Naive thymus-derived CD8-positive, alpha-beta T cell (primary cell): ENCODE measurements at regions of chr4 and their contacts with region 1.

Region 1: DNA sequence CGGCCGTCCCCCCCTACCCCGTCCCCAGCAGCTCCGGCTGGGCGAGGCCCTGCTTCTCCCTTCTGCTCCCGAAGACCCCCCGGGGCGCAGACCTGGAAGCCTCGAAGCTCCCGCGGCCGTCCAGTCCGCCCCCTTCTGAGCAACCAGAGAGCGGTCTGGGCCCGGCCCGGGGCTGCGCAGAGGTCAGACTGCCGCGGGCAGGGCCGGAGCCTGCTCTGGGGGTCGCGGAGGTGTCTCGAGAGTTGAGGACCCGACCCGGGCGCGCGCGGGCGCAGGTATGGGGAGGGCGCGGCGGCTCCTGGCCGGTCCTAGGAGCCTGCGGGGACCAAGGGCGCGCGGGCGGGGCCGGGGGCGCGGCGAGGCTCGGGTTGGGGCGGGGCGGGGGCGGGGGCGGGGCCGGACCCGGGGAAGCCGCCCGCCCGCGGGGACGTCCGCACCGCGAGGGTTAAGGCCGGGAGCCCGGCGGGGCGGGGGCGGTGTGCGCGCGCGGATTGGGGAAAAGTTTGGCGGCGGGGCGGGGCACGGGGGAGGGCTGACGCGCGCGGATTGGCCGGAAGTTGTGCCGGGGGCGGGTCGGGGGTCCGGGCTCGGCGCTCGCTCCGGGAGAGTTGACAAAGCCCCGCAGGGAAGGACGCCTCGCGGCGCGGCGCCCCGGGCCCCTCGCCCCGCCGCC is at the start of gene FGFRL1:
- DNase-seq: peak; percentile 75 to 94 (median 84)
- ATAC-seq: peak; percentile 55 to 67
- H3K4me3 Mint-ChIP-seq: peak within 1 kb of the TSS; percentile 83 to 96 (median 92)
- H3K27ac Mint-ChIP-seq: peak within 1 kb of the TSS; percentile 81 to 97 (median 94)
- H3K4me1 Mint-ChIP-seq: peaks cover 9 to 20% (median 17%) of the 10 kb centered on the region in 4 donors
- H3K27me3 Mint-ChIP-seq: peaks cover 8 to 33% (median 23%) of the 10 kb centered on the region in 5 donors
- polyA plus RNA-seq, gene FGFRL1: 0.65 to 1.2 (median 0.73) TPM

Region 2: GRCh38 chr4:993111-994029 is 17.8 kb before region 1 on chr4 and contains the start of gene SLC26A1:
- POLR2A ChIA-PET with region 1: no interaction called
- DNase-seq: no peak
- ATAC-seq: no peak
- H3K4me3 Mint-ChIP-seq: no peak within 1 kb of the TSS
- H3K27ac Mint-ChIP-seq: no peak within 1 kb of the TSS
- H3K4me1 Mint-ChIP-seq: peaks cover 4 to 12% (median 10%) of the 10 kb centered on the region in 4 donors
- H3K27me3 Mint-ChIP-seq: peaks cover under 1 to 6% (median 2%) of the 10 kb centered on the region in 5 donors
- polyA plus RNA-seq, gene SLC26A1: 0.72 to 1.3 (median 1.1) TPM

Region 3: GRCh38 chr4:1033840-1034551 is 22.8 kb after region 1 on chr4:
- POLR2A ChIA-PET with region 1: no interaction called
- DNase-seq: no peak
- ATAC-seq: no peak
- H3K4me3 Mint-ChIP-seq: no peak overlapping the region
- H3K27ac Mint-ChIP-seq: no peak overlapping the region
- H3K4me1 Mint-ChIP-seq: no peaks in the 10 kb centered on the region
- H3K27me3 Mint-ChIP-seq: peaks cover 0 to 6% (median 0%) of the 10 kb centered on the region in 5 donors

Region 4: DNA sequence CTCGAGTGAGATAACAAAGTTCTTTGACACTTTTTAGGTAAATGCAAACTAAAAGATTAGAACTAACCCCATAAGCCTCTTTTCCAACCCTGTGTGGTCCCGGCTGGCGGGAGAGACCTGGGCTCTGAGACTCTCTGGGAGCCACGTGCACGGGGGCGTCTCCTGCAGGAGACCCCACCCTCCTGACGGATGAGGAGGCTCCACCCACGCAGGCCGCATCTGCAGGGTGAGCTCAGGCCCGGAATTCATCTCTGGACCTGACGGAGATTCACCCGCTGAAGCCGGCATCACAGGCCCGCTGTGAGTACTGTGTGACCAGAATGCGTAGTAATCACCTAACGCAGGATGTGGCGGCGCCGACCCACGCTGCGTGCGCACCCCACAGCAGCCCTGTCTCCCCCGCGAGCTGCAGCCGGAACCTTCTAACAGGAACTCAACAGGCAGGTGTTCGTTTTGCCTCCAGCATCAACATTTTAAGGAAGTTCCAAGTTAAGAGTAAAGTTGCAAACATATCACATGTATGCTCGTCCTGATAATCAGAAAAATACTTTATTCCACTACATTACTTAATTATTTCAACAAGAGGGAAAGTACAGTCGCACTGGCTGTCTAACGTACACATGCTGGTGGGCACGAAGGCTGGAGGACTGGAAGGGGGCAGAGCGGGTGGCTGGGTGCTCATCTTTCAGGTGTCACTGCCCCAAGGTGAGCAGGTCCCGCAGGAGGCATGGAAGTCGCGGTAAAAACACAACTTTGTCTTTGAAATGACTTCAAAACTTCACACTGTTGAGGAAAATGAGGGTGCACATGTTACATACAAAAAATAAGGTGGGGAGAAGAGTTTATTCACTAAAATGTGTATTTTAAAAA is 44.8 kb after region 1 on chr4:
- POLR2A ChIA-PET with region 1: interaction called, 10 read pairs
- DNase-seq: peak; percentile 71 to 94 (median 90)
- ATAC-seq: peak; percentile 97 to 98
- H3K4me3 Mint-ChIP-seq: peak overlapping the region; percentile 69 to 90 (median 84)
- H3K27ac Mint-ChIP-seq: peak overlapping the region; percentile 93 to 99 (median 98)
- H3K4me1 Mint-ChIP-seq: peaks cover 9 to 16% (median 10%) of the 10 kb centered on the region in 4 donors
- H3K27me3 Mint-ChIP-seq: peaks cover 0 to 2% (median 0%) of the 10 kb centered on the region in 5 donors

Region 5: DNA sequence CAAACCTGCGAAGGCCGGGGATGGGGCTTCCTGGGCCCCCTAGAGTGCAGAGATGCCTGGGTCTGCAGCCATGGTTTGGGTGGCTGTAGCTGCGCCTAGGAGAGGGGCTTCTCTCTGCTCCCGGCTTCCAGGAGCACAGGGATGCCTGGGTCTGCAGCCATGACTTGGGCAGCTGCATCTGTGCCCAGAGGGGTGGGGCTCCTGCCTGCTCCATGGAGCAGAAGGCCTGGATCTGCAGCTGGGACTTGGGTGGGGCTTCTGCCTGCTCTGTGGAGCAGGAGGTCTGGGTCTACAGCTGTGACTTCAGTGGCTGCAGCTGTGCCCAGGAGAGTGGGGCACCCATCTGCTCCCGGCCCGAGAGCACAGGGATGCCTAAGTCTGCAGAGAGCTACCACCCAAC is 140.4 kb after region 1 on chr4:
- POLR2A ChIA-PET with region 1: no interaction called
- DNase-seq: no peak
- ATAC-seq: no peak
- H3K4me3 Mint-ChIP-seq: no peak overlapping the region
- H3K27ac Mint-ChIP-seq: no peak overlapping the region
- H3K4me1 Mint-ChIP-seq: peaks cover 0 to 2% (median under 1%) of the 10 kb centered on the region in 4 donors
- H3K27me3 Mint-ChIP-seq: peaks cover 5 to 28% (median 8%) of the 10 kb centered on the region in 5 donors

Region 6: GRCh38 chr4:1201851-1202525 is 190.8 kb after region 1 on chr4:
- POLR2A ChIA-PET with region 1: no interaction called
- DNase-seq: peak; percentile 50 to 93 (median 87)
- ATAC-seq: peak; percentile 81 to 82
- H3K4me3 Mint-ChIP-seq: peak overlapping the region; percentile 76 to 94 (median 82)
- H3K27ac Mint-ChIP-seq: peak overlapping the region; percentile 93 to 99 (median 98)
- H3K4me1 Mint-ChIP-seq: peaks cover 14 to 60% (median 46%) of the 10 kb centered on the region in 4 donors
- H3K27me3 Mint-ChIP-seq: no peaks in the 10 kb centered on the region